ENCODE measurements at regions of chr9 and their contacts with region 1.

Region 1: GRCh38 chr9:103789686-103790085 is 304.4 kb upstream of the SMC2 start:
- DNase-seq: peak; percentile 33
- H3K4me3 ChIP-seq: no peak overlapping the region
- H3K27ac ChIP-seq: no peak overlapping the region
- H3K4me1 ChIP-seq: no peaks in the 10 kb centered on the region
- H3K27me3 ChIP-seq: no peaks in the 10 kb centered on the region
- CTCF ChIP-seq: peak; percentile 76 to 77

Region 2: DNA sequence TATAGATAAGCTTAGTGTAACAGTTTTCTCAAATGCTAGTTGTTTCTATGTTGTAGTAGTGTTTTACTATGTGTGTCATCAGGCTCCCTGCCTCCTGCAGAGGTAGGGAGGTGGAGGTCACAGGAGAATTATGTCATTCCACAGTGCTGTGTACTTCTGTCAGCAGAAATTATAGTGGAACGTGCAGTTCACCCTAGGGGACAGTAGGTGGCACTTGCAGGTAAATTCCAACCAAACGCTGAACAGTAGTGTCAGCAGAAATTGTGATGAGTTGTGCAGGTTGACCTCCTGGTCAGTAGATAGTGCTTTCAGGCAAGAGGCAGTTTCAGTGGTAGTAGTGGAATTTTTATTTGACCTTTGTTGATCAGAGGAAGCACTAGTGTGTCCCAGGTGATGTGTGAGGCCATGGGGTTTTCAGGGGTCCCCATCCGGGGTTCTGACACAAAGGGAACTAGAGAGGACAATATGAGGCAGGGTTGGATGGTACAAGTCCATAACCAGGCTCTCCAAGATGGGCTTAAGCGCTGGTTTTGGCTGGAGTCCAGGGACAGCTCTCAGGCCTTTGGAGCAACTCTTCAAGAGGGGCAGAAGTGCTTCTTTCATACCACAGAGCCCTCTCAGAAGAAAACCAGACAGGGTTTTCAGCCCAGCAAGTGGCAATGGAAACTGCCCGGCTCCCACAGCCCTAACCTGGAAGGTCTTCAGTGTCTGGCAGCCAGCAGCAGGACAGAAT is 391.7 kb before region 1 on chr9:
- CTCF ChIA-PET with region 1: no interaction called
- dilution Hi-C with region 1: no loop called
- in situ Hi-C with region 1: no loop called
- intact Hi-C with region 1: loop called (anchors 5 kb)
- DNase-seq: peak; percentile 58
- H3K4me3 ChIP-seq: no peak overlapping the region
- H3K27ac ChIP-seq: no peak overlapping the region
- H3K4me1 ChIP-seq: no peaks in the 10 kb centered on the region
- H3K27me3 ChIP-seq: no peaks in the 10 kb centered on the region
- CTCF ChIP-seq: peak; percentile 85 to 87

Region 3: DNA sequence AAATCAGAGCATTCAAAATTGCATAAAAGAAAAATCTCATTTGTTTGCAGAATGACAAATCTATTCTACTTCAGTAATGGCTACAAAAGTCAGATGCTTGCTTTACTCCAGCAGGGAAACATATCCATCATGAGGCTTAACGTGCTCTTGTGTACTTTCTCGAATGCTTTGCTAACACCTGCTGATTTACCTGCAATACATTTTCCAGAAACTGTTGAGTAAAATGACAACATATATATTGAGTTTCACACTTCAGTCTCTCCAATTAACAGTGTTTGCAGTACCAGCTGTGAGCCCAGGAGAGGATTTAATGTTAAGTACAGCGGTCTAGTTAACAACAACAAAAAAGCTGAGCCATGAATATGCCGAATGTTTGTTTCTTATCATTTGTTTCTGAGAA is 87.1 kb before region 1 on chr9:
- CTCF ChIA-PET with region 1: no interaction called
- dilution Hi-C with region 1: no loop called
- in situ Hi-C with region 1: no loop called
- intact Hi-C with region 1: no loop called
- DNase-seq: no peak
- H3K4me3 ChIP-seq: no peak overlapping the region
- H3K27ac ChIP-seq: no peak overlapping the region
- H3K4me1 ChIP-seq: no peaks in the 10 kb centered on the region
- H3K27me3 ChIP-seq: no peaks in the 10 kb centered on the region
- CTCF ChIP-seq: no peak

Region 4: DNA sequence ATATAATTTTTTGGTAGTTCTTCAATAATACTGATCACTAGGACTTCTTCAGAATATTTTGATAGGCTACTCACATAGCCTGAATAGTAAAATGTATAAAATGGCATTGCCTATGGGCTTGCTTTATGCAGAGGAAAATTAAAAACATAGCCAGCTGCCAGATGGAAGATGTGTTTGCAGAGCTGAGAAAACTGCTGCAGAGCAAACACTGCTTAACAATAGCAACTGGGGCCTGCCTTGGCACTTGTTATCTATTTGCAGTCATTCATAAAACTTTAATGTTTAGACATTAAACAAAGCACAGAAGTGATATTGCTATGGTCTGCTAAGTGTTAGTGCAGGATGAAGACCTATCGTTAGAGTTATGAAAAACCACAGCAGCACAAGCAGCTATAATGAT is 153.0 kb after region 1 on chr9:
- CTCF ChIA-PET with region 1: no interaction called
- dilution Hi-C with region 1: no loop called
- in situ Hi-C with region 1: no loop called
- intact Hi-C with region 1: loop called (anchors 10 kb)
- DNase-seq: no peak
- H3K4me3 ChIP-seq: no peak overlapping the region
- H3K27ac ChIP-seq: no peak overlapping the region
- H3K4me1 ChIP-seq: no peaks in the 10 kb centered on the region
- H3K27me3 ChIP-seq: no peaks in the 10 kb centered on the region
- CTCF ChIP-seq: no peak

Region 5: DNA sequence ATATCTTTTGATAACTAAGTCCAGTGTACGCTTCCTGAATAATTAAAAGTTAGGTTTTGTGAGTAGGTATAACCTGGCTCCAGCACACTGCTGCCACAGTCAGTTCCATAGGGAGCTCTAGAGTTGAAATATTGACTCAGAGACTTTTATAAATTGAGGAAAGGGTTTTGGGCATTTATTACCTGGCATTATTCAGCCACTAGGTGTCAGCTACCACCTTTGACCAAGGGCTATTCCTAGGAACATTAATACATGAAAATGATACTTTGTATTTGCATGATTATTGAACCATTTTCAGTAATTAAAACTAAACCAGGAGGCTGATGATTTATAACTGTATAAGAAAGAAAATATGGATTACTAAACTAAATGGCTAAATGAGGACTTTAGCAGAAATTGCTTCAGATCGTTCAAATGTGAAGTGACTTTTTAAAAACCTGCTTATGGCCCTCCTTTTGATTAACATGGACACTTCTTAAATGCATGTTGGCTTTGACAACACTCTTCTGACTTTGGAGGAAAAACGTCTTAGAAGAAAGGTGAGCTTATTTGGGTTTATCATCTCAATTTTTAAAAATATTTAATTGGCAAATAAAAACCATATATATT is 387.4 kb after region 1 on chr9:
- CTCF ChIA-PET with region 1: interaction called, 8 read pairs
- dilution Hi-C with region 1: no loop called
- in situ Hi-C with region 1: no loop called
- intact Hi-C with region 1: loop called (anchors 10 kb)
- DNase-seq: peak; percentile 32
- H3K4me3 ChIP-seq: no peak overlapping the region
- H3K27ac ChIP-seq: no peak overlapping the region
- H3K4me1 ChIP-seq: no peaks in the 10 kb centered on the region
- H3K27me3 ChIP-seq: no peaks in the 10 kb centered on the region
- CTCF ChIP-seq: peak; percentile 67 to 76